Activated naive CD4-positive, alpha-beta T cell treated with anti-CD3 and anti-CD28 coated beads, Interleukin-2, amount 10 ng/mL, durations not matched to agents 7 days and 5 days (primary cell): ENCODE measurements at regions of chr7 and their contacts with region 1.

Region 1: DNA sequence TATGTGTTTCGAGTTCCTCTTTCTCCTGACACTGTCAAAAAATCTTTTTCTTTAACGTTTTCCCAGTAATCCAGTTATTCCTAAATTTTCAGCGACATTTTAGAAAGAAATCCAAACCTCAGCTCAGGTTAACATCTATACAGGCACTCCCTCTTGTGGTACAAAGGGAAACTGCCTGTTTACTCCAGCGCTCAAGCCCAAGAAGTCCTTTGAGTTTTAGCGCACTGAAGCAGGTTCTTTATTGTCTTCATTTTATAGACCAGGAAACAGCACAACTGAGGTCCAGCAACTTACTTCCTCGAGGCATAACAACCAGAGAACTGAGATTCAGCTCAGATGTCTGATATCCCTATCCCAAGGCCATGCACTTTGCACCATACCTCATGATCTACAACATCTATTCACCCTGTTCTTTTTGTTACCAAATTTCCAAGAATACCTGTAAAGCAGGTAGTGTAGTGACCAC is 287.2 kb upstream of the MKLN1 start:
- DNase-seq: peak; percentile 68
- H3K4me3 Mint-ChIP-seq: no peak overlapping the region
- H3K27ac Mint-ChIP-seq: peak overlapping the region; percentile 47
- H3K4me1 Mint-ChIP-seq: peaks cover 62% of the 10 kb centered on the region
- H3K27me3 Mint-ChIP-seq: no peaks in the 10 kb centered on the region

Region 2: GRCh38 chr7:130875265-130875741 is 165.2 kb before region 1 on chr7:
- CTCF ChIA-PET with region 1: interaction called, 17 read pairs
- DNase-seq: peak; percentile 65
- H3K4me3 Mint-ChIP-seq: no peak overlapping the region
- H3K27ac Mint-ChIP-seq: peak overlapping the region; percentile 22
- H3K4me1 Mint-ChIP-seq: peaks cover 27% of the 10 kb centered on the region
- H3K27me3 Mint-ChIP-seq: no peaks in the 10 kb centered on the region

Region 3: DNA sequence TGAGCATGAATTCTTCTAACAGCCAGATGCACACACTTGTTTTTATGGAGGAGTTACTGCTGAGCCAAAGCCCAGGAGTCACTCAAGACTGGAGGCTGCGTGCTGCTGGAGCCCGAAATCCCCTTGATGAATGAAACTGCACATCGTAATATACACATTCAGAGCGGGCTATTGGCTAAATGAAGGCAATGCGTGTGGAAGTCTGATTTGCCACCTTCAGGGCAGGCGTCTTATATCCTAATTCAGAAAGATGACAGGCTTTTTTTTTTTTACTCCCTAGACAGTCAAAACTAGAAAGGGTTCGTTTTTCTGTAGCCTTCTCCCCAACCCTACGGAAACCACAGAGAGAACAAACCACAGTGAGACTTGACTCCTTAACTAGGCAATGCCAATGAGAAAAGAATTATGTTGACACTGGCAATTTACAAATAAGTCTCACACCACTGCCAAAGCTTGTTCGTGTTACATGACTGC is 79.3 kb before region 1 on chr7:
- CTCF ChIA-PET with region 1: interaction called, 11 read pairs
- DNase-seq: peak; percentile 87
- H3K4me3 Mint-ChIP-seq: peak overlapping the region; percentile 90
- H3K27ac Mint-ChIP-seq: peak overlapping the region; percentile 99
- H3K4me1 Mint-ChIP-seq: peaks cover 49% of the 10 kb centered on the region
- H3K27me3 Mint-ChIP-seq: no peaks in the 10 kb centered on the region

Region 4: DNA sequence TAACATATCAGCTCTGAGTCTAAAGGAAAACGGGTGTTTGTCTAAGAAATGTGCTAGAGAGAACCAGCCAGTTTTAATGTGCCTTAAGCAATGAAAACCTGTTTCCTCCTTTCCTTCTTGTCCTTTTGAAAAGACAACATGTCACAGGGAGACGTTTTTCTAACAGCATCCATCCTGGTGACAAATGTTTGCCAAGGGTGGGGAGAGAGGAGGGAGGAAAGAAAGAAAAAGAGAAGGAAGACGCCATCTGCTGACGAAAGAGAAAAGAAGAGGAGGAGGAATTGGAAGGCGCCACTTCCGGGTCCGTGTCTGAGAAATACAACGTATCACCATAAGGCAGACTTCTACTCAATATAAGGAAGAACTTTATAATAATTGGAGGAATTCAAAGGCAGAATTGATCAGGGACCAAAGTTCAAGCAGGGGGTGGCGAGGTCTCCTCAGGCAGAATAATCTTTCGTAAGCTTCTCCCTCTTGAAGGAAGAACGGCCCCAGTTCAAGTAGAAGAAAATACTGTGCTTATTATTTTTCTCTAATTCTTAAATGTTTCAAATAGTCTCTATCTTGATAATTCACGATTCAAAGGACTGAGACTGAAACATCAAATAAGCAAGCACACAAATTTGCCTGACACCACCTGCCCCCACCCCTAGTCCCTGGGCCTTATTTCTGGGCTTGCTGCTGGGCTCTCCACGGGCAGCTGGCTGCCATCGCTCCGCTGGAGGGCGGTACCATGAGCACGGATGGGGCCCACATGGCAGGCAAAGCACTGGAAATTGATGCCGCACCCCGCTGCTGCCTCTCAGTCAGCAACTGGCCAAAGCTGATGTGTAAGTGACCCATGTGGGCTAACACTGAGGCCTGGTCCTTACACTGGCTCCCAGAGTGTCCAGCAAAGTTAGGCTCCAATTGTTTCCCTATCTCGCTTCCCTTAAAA is 32.8 kb before region 1 on chr7:
- CTCF ChIA-PET with region 1: interaction called, 13 read pairs
- DNase-seq: peak; percentile 73
- H3K4me3 Mint-ChIP-seq: peak overlapping the region; percentile 25
- H3K27ac Mint-ChIP-seq: peak overlapping the region; percentile 63
- H3K4me1 Mint-ChIP-seq: peaks cover 73% of the 10 kb centered on the region
- H3K27me3 Mint-ChIP-seq: no peaks in the 10 kb centered on the region

Region 5: GRCh38 chr7:131027287-131027773 is 13.2 kb before region 1 on chr7:
- CTCF ChIA-PET with region 1: interaction called, 10 read pairs
- DNase-seq: no peak
- H3K4me3 Mint-ChIP-seq: no peak overlapping the region
- H3K27ac Mint-ChIP-seq: peak overlapping the region; percentile 53
- H3K4me1 Mint-ChIP-seq: peaks cover 76% of the 10 kb centered on the region
- H3K27me3 Mint-ChIP-seq: no peaks in the 10 kb centered on the region